ENCODE measurements at regions of chr1 and their contacts with region 1.

Region 1: DNA sequence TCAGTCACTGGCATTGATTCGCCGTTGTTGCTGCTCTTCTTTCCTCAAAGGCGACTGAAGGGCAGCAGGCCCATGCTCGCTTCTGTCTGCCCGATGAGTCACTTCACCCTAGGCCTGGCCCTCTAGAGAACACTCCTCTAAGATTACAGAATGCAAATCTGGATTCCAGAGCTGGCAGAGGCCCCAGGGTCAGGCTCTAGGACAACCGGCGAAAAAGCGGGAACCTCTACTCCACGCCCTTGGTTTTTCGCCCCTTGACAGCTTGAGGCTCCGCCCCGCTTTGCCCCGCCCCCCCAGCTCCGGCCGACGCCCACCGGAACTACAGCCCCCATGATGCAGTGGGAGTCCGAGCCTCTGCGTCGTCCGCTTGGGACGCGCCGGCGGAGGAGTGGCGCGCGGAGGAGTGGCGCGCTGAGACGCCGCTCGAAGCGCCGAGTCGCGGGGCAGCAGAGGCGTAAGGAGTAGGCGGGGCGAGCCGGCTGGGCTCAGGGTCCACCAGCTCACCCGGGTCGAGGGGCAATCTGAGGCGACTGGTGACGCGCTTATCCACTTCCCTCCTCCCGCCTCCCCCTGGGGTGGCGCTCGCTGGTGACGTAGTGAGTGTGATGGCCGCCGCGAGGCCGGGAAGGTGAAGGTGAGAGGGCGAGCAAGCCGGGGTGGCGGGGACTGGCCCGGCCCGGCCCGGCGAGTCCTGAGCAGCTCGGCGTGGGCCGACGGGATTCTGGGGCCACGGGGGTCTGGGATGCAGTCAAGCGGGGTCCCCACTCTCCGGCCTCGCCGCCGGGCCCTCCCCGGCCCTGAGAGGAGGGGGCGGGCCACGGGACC is at the start of gene MFN2:
- DNase-seq: peak; percentile 95 to 99
- H3K4me3 ChIP-seq: peak within 1 kb of the TSS; percentile 80 to 100 (median 96)
- H3K27ac ChIP-seq: peak within 1 kb of the TSS; percentile 81 to 100 (median 96)
- H3K4me1 ChIP-seq: peaks cover 50 to 61% (median 57%) of the 10 kb centered on the region in 4 donors
- H3K27me3 ChIP-seq: no peaks in the 10 kb centered on the region
- CTCF ChIP-seq: no peak
- EP300 ChIP-seq: peak; percentile 50
- POLR2A ChIP-seq: no peak
- total RNA-seq, gene MFN2: 46.6 to 68.0 (median 53.6) TPM

Region 2: GRCh38 chr1:11918779-11919519 is 61.1 kb before region 1 on chr1:
- intact Hi-C with region 1: loop called (anchors 10 kb)
- DNase-seq: no peak
- H3K4me3 ChIP-seq: no peak overlapping the region
- H3K27ac ChIP-seq: peak overlapping the region in 3 of 5 donors; percentile 38 to 74 (median 64)
- H3K4me1 ChIP-seq: peaks cover 38 to 60% (median 49%) of the 10 kb centered on the region in 4 donors
- H3K27me3 ChIP-seq: no peaks in the 10 kb centered on the region
- CTCF ChIP-seq: no peak
- EP300 ChIP-seq: no peak
- POLR2A ChIP-seq: no peak

Measured in stomach (tissue), 19 donors.